K562 (cell line): ENCODE measurements at regions of chr9 and their contacts with region 1.

Region 1: GRCh38 chr9:86486891-86487837 is 133.0 kb upstream of the TUT7 start:
- DNase-seq: peak; percentile 6 to 27 (median 18)
- ATAC-seq: 0 out of 3 replicates have a peak, but pooled peaks have one; percentile 48
- H3K4me3 ChIP-seq: no peak overlapping the region
- H3K27ac ChIP-seq: no peak overlapping the region
- H3K4me1 ChIP-seq: no peaks in the 10 kb centered on the region
- H3K27me3 ChIP-seq: no peaks in the 10 kb centered on the region
- CTCF ChIP-seq: peak in 2 of 3 experiments; percentile 32 to 58; a peak in 2 of 6 replicates
- EP300 ChIP-seq: no peak
- POLR2A ChIP-seq: no peak
- RAD21 ChIP-seq: peak; percentile 39 to 63; a peak in 3 of 4 replicates

Region 2: DNA sequence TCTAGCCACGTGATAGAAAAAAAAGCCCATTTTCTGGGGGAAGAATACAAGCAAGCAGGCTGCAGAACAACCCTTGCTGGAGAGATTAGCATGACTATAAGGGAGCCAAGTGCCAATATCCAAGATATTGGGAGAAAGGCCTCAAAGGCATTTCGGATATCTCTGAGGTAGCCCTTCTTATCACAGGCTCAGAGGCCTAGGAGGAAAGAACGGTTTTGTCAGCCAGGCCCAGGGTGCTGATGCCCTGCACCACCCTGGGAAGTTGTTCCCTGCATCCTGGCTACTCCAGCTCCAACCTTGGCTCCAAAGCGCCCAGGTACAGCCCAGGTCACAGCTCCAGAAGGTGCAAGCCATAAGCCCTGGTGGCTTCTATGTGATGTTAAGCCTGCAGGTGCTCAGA is 294.1 kb before region 1 on chr9:
- CTCF ChIA-PET with region 1: no interaction called
- POLR2A ChIA-PET with region 1: no interaction called
- in situ Hi-C with region 1: no loop called
- intact Hi-C with region 1: no loop called
- DNase-seq: no peak
- ATAC-seq: no peak
- H3K4me3 ChIP-seq: no peak overlapping the region
- H3K27ac ChIP-seq: no peak overlapping the region
- H3K4me1 ChIP-seq: no peaks in the 10 kb centered on the region
- H3K27me3 ChIP-seq: no peaks in the 10 kb centered on the region
- CTCF ChIP-seq: no peak
- EP300 ChIP-seq: no peak
- POLR2A ChIP-seq: no peak
- RAD21 ChIP-seq: no peak

Region 3: DNA sequence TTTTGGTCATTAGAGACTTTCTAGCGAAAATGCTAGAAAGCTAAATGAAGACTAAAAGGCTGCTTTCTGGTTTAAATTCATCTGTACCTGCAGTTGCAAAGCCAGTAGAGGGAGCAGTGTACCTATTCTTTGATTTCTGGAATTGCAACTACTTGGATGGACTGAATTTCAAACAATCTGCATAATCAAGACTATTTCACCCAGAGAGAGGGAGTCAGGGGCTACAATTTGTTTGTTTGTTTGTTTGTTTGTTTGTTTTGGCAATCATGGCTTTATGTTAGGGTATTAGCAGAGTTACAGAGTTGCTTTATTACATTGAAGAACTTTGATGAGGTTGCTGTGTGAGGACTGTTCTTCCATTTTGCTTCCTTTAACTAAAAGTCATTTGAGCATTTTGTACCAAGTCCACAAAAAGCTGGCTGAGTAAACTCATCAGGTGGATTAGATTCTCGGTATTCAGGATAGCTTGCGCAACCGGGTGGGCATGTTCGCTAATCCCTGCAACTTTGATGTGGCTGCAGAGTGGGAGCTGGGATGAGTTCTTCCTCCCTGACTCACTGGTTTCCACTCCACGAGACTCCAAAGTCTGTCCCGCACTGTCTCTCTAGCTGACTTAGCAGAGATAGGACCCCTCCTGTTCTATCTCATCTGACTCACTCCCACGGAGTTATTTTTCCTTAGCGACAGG is 53.0 kb before region 1 on chr9:
- CTCF ChIA-PET with region 1: no interaction called
- POLR2A ChIA-PET with region 1: no interaction called
- in situ Hi-C with region 1: no loop called
- intact Hi-C with region 1: loop called (anchors 10 kb)
- DNase-seq: peak in 3 of 4 experiments; percentile 5 to 29 (median 22)
- ATAC-seq: peak; percentile 61; the same call in 1 of the 3 replicates
- H3K4me3 ChIP-seq: no peak overlapping the region
- H3K27ac ChIP-seq: no peak overlapping the region
- H3K4me1 ChIP-seq: no peaks in the 10 kb centered on the region
- H3K27me3 ChIP-seq: peaks cover 0 to 7% of the 10 kb centered on the region in 2 experiments; a peak in 1 of 5 replicates
- CTCF ChIP-seq: peak; percentile 40 to 71 (median 61); a peak in 5 of 6 replicates
- EP300 ChIP-seq: no peak
- POLR2A ChIP-seq: no peak
- RAD21 ChIP-seq: peak; percentile 39 to 62; a peak in 3 of 4 replicates